CD8-positive, alpha-beta T cell (primary cell): ENCODE measurements at regions of chr2 and their contacts with region 1.

Region 1: GRCh38 chr2:196205881-196206435 is 34.6 kb upstream of the STK17B start:
- DNase-seq: no peak
- ATAC-seq: no peak
- H3K4me3 ChIP-seq: no peak overlapping the region
- H3K4me3 Mint-ChIP-seq: no peak overlapping the region
- H3K27ac ChIP-seq: no peak overlapping the region
- H3K27ac Mint-ChIP-seq: no peak overlapping the region
- H3K4me1 ChIP-seq: peaks cover 31% of the 10 kb centered on the region
- H3K4me1 Mint-ChIP-seq: peaks cover 61% of the 10 kb centered on the region
- H3K27me3 ChIP-seq: no peaks in the 10 kb centered on the region
- H3K27me3 Mint-ChIP-seq: no peaks in the 10 kb centered on the region
- CTCF ChIP-seq: no peak

Region 2: GRCh38 chr2:196143730-196144131 is 62.2 kb before region 1 on chr2:
- CTCF ChIA-PET with region 1: no interaction called
- POLR2A ChIA-PET with region 1: no interaction called
- intact Hi-C with region 1: no loop called
- DNase-seq: no peak
- ATAC-seq: no peak
- H3K4me3 ChIP-seq: no peak overlapping the region
- H3K4me3 Mint-ChIP-seq: peak overlapping the region; percentile 26
- H3K27ac ChIP-seq: peak overlapping the region in 1 of 2 experiments; percentile 16
- H3K27ac Mint-ChIP-seq: peak overlapping the region; percentile 81
- H3K4me1 ChIP-seq: peaks cover 81% of the 10 kb centered on the region
- H3K4me1 Mint-ChIP-seq: peaks cover 75% of the 10 kb centered on the region
- H3K27me3 ChIP-seq: no peaks in the 10 kb centered on the region
- H3K27me3 Mint-ChIP-seq: no peaks in the 10 kb centered on the region
- CTCF ChIP-seq: no peak

Region 3: DNA sequence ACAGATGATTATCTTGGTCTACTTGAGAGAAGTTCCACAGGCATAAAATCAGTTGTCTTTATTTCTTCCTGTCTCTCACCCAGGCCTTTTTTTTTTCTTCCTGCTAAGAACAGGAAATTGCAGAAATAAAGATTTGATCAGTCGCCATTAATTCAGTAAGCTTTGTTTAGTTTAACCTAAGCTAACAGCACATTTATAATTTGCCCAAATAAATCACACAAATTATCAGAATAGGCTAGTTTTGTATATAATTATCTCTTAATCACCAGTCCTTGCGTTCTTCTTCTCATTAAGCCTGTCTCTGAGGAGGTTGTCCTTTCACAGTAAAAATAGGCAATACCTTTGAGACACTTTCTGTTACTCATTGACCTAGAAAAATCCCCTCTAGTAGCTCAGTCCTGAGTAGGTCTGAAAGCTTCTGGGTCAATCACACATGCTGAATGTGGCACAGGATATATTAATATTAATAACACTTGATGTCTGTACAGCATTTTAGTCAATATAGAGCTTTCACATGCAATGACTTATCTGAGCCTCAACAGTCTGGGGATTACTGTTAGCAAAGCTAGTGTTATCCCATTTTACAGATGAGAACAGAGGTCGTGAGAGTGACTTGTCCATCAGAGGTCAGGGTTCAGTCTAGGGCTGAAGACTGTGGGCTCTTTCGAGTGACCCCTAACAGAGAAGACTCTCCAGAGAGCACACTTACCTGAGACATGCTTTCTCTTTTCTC is 23.4 kb before region 1 on chr2:
- CTCF ChIA-PET with region 1: interaction called, 3 read pairs
- POLR2A ChIA-PET with region 1: interaction called, 27 read pairs
- intact Hi-C with region 1: loop called (anchors 1 to 2 kb)
- DNase-seq: peak in 2 of 9 experiments; percentile 60 to 77
- ATAC-seq: peak; percentile 22
- H3K4me3 ChIP-seq: no peak overlapping the region
- H3K4me3 Mint-ChIP-seq: peak overlapping the region; percentile 68
- H3K27ac ChIP-seq: peak overlapping the region; percentile 20 to 88
- H3K27ac Mint-ChIP-seq: peak overlapping the region; percentile 92
- H3K4me1 ChIP-seq: peaks cover 70% of the 10 kb centered on the region
- H3K4me1 Mint-ChIP-seq: peaks cover 88% of the 10 kb centered on the region
- H3K27me3 ChIP-seq: no peaks in the 10 kb centered on the region
- H3K27me3 Mint-ChIP-seq: no peaks in the 10 kb centered on the region
- CTCF ChIP-seq: no peak

Region 4: GRCh38 chr2:196225213-196225612 is 19.3 kb after region 1 on chr2:
- CTCF ChIA-PET with region 1: interaction called, 6 read pairs
- POLR2A ChIA-PET with region 1: interaction called, 3 read pairs
- intact Hi-C with region 1: loop called in 1 of 2 experiments (anchors 1 kb)
- DNase-seq: no peak
- ATAC-seq: no peak
- H3K4me3 ChIP-seq: no peak overlapping the region
- H3K4me3 Mint-ChIP-seq: peak overlapping the region; percentile 8
- H3K27ac ChIP-seq: no peak overlapping the region
- H3K27ac Mint-ChIP-seq: peak overlapping the region; percentile 25
- H3K4me1 ChIP-seq: peaks cover 61% of the 10 kb centered on the region
- H3K4me1 Mint-ChIP-seq: peaks cover 78% of the 10 kb centered on the region
- H3K27me3 ChIP-seq: no peaks in the 10 kb centered on the region
- H3K27me3 Mint-ChIP-seq: no peaks in the 10 kb centered on the region
- CTCF ChIP-seq: no peak

Region 5: GRCh38 chr2:196239622-196240587 is 33.9 kb after region 1 on chr2:
- CTCF ChIA-PET with region 1: interaction called, 3 read pairs
- POLR2A ChIA-PET with region 1: interaction called, 3 read pairs
- intact Hi-C with region 1: loop called (anchors 1 kb)
- DNase-seq: peak; percentile 55 to 94 (median 81)
- ATAC-seq: peak; percentile 72
- H3K4me3 ChIP-seq: peak overlapping the region; percentile 7 to 21
- H3K4me3 Mint-ChIP-seq: peak overlapping the region; percentile 72
- H3K27ac ChIP-seq: peak overlapping the region; percentile 33 to 73
- H3K27ac Mint-ChIP-seq: peak overlapping the region; percentile 92
- H3K4me1 ChIP-seq: peaks cover 66% of the 10 kb centered on the region
- H3K4me1 Mint-ChIP-seq: peaks cover 74% of the 10 kb centered on the region
- H3K27me3 ChIP-seq: no peaks in the 10 kb centered on the region
- H3K27me3 Mint-ChIP-seq: no peaks in the 10 kb centered on the region
- CTCF ChIP-seq: peak; percentile 35

Region 6: DNA sequence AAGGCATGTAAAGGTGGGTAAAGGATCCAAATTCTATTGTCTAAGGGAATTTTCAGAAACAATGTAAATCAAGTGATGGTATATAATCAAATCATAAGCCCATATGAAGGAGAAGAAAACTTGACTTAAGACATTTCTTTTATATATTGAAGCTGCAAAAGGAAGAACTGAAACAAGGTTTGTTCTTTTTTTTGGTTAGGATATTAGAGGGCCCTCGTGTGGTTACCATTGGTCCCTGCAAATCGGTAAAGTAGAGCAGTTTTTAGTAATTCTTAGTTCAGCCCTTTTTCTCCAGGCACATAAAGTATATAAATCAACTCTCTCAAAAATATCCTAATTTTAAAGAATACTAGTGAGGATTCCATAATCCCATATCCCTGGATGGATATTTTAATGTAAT is 71.0 kb after region 1 on chr2:
- CTCF ChIA-PET with region 1: interaction called, 4 read pairs
- POLR2A ChIA-PET with region 1: no interaction called
- intact Hi-C with region 1: loop called in 1 of 2 experiments (anchors 2 kb)
- DNase-seq: peak in 4 of 9 experiments; percentile 28 to 78 (median 56)
- ATAC-seq: peak; percentile 55
- H3K4me3 ChIP-seq: no peak overlapping the region
- H3K4me3 Mint-ChIP-seq: no peak overlapping the region
- H3K27ac ChIP-seq: no peak overlapping the region
- H3K27ac Mint-ChIP-seq: peak overlapping the region; percentile 72
- H3K4me1 ChIP-seq: peaks cover 38% of the 10 kb centered on the region
- H3K4me1 Mint-ChIP-seq: peaks cover 39% of the 10 kb centered on the region
- H3K27me3 ChIP-seq: no peaks in the 10 kb centered on the region
- H3K27me3 Mint-ChIP-seq: no peaks in the 10 kb centered on the region
- CTCF ChIP-seq: peak; percentile 85

Region 7: GRCh38 chr2:196390243-196391148 is 184.5 kb after region 1 on chr2:
- CTCF ChIA-PET with region 1: no interaction called
- POLR2A ChIA-PET with region 1: no interaction called
- intact Hi-C with region 1: no loop called
- DNase-seq: no peak
- ATAC-seq: no peak
- H3K4me3 ChIP-seq: no peak overlapping the region
- H3K4me3 Mint-ChIP-seq: no peak overlapping the region
- H3K27ac ChIP-seq: no peak overlapping the region
- H3K27ac Mint-ChIP-seq: no peak overlapping the region
- H3K4me1 ChIP-seq: no peaks in the 10 kb centered on the region
- H3K4me1 Mint-ChIP-seq: no peaks in the 10 kb centered on the region
- H3K27me3 ChIP-seq: no peaks in the 10 kb centered on the region
- H3K27me3 Mint-ChIP-seq: peaks cover 8% of the 10 kb centered on the region
- CTCF ChIP-seq: no peak

Region 8: GRCh38 chr2:196427986-196428634 is 222.2 kb after region 1 on chr2:
- CTCF ChIA-PET with region 1: no interaction called
- POLR2A ChIA-PET with region 1: no interaction called
- intact Hi-C with region 1: no loop called
- DNase-seq: no peak
- ATAC-seq: no peak
- H3K4me3 ChIP-seq: no peak overlapping the region
- H3K4me3 Mint-ChIP-seq: no peak overlapping the region
- H3K27ac ChIP-seq: no peak overlapping the region
- H3K27ac Mint-ChIP-seq: no peak overlapping the region
- H3K4me1 ChIP-seq: no peaks in the 10 kb centered on the region
- H3K4me1 Mint-ChIP-seq: peaks cover 1% of the 10 kb centered on the region
- H3K27me3 ChIP-seq: no peaks in the 10 kb centered on the region
- H3K27me3 Mint-ChIP-seq: peaks cover 10% of the 10 kb centered on the region
- CTCF ChIP-seq: no peak

Region 9: DNA sequence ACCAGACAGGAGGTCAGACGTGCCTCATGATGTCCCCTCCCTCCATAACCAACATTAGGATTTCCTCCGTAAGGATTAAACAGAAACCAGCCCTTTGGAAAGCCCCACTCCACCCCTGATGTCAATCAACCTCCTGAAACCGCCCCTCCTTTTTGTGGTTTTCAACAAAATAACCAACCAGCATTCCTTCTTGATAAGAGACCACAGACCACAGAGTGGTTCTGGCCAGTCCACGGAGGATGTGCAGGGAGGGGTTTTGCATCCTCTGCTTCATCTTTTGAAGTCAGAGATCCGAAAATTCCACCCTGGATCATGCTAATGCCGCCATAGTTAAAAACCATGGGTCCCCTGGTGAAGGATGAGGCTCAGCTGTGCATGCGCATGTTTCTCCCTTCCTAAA is 253.6 kb after region 1 on chr2:
- CTCF ChIA-PET with region 1: no interaction called
- POLR2A ChIA-PET with region 1: no interaction called
- intact Hi-C with region 1: no loop called
- DNase-seq: peak in 2 of 9 experiments; percentile 11 to 28
- ATAC-seq: no peak
- H3K4me3 ChIP-seq: no peak overlapping the region
- H3K4me3 Mint-ChIP-seq: no peak overlapping the region
- H3K27ac ChIP-seq: no peak overlapping the region
- H3K27ac Mint-ChIP-seq: no peak overlapping the region
- H3K4me1 ChIP-seq: no peaks in the 10 kb centered on the region
- H3K4me1 Mint-ChIP-seq: peaks cover 14% of the 10 kb centered on the region
- H3K27me3 ChIP-seq: peaks cover 0 to 8% of the 10 kb centered on the region in 2 experiments
- H3K27me3 Mint-ChIP-seq: peaks cover 41% of the 10 kb centered on the region
- CTCF ChIP-seq: no peak